ENCODE measurements at regions of chr17 and their contacts with region 1.

Region 1: GRCh38 chr17:50758989-50759544 is 8.3 kb downstream of the ANKRD40CL start:
- DNase-seq: no peak
- H3K4me3 ChIP-seq: no peak overlapping the region
- H3K27ac ChIP-seq: no peak overlapping the region
- H3K4me1 ChIP-seq: peaks cover 6% of the 10 kb centered on the region; the same call in 1 of the 2 replicates
- H3K27me3 ChIP-seq: no peaks in the 10 kb centered on the region
- CTCF ChIP-seq: no peak

Region 2: GRCh38 chr17:50519231-50519760 is 239.8 kb before region 1 on chr17:
- CTCF ChIA-PET with region 1: interaction called, 14 read pairs
- POLR2A ChIA-PET with region 1: interaction called, 4 read pairs
- intact Hi-C with region 1: no loop called
- DNase-seq: no peak
- H3K4me3 ChIP-seq: no peak overlapping the region
- H3K27ac ChIP-seq: no peak overlapping the region
- H3K4me1 ChIP-seq: peaks cover 9% of the 10 kb centered on the region
- H3K27me3 ChIP-seq: no peaks in the 10 kb centered on the region
- CTCF ChIP-seq: no peak

Region 3: DNA sequence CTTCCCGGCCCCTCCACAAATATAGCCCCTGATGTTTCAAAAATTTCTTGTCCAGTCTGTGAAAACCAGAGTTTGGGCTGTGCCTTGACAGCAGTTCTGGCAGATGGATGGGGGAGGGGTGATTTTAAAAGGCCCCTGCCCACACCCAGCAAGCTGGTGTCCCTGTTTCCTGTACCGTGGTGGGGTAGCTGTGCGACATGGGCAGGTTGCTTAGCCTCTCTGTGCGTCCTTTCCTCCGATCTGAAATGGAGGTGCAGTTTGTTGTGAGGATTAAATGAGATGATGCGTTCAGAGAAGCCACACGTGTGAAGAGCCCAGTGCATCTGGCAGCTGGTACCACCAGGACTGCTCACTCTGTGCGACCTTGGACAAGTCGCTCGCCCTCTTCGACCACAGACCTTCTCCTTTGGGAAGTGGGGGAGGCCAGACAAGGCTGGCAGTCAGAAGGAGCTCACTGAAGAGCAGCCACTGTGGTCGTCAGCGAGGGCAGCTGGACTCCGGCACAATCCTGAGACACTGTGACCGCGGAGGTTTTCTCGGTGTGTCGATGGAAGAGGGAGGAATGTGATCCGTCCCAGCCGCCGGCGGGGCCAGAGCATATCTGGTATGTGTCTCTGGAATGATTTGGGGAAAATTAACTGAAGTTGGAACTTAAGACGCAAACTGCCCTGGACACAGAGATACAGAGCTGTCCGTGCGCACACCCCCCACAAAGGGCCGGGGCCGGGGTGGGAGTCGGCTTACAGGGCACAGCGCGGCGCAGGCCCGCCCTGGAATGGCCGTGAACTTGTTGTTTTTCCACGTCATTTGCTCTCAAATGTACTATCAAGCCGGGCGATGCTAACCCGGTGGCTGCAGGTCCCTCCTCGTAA is 75.6 kb after region 1 on chr17:
- CTCF ChIA-PET with region 1: no interaction called
- POLR2A ChIA-PET with region 1: interaction called, 15 read pairs
- intact Hi-C with region 1: no loop called
- DNase-seq: peak in 1 of 2 experiments; percentile 2
- H3K4me3 ChIP-seq: no peak overlapping the region
- H3K27ac ChIP-seq: no peak overlapping the region
- H3K4me1 ChIP-seq: no peaks in the 10 kb centered on the region
- H3K27me3 ChIP-seq: peaks cover 27% of the 10 kb centered on the region
- CTCF ChIP-seq: no peak